Mucosa of descending colon (tissue), 3 donors: ENCODE measurements at regions of chr3 and their contacts with region 1.

Region 1: GRCh38 chr3:52001443-52001974 is 5.8 kb upstream of the RPL29 start:
- DNase-seq: peak; percentile 71 to 84 (median 81)
- ATAC-seq: peak; percentile 82
- H3K4me3 ChIP-seq: no peak overlapping the region
- H3K4me1 ChIP-seq: peaks cover 5% of the 10 kb centered on the region
- CTCF ChIP-seq: peak; percentile 71

Region 2: GRCh38 chr3:52123106-52123725 is 121.7 kb after region 1 on chr3:
- intact Hi-C with region 1: loop called in 1 of 2 experiments (anchors 5 kb)
- DNase-seq: peak; percentile 78 to 87 (median 86)
- ATAC-seq: peak; percentile 93
- H3K4me3 ChIP-seq: no peak overlapping the region
- H3K4me1 ChIP-seq: no peaks in the 10 kb centered on the region
- CTCF ChIP-seq: peak; percentile 88

Region 3: GRCh38 chr3:52144034-52144795 is 142.7 kb after region 1 on chr3:
- intact Hi-C with region 1: loop called (anchors 5 kb)
- DNase-seq: peak; percentile 77 to 96 (median 83)
- ATAC-seq: peak; percentile 96
- H3K4me3 ChIP-seq: no peak overlapping the region
- H3K4me1 ChIP-seq: no peaks in the 10 kb centered on the region
- CTCF ChIP-seq: peak; percentile 92

Region 4: DNA sequence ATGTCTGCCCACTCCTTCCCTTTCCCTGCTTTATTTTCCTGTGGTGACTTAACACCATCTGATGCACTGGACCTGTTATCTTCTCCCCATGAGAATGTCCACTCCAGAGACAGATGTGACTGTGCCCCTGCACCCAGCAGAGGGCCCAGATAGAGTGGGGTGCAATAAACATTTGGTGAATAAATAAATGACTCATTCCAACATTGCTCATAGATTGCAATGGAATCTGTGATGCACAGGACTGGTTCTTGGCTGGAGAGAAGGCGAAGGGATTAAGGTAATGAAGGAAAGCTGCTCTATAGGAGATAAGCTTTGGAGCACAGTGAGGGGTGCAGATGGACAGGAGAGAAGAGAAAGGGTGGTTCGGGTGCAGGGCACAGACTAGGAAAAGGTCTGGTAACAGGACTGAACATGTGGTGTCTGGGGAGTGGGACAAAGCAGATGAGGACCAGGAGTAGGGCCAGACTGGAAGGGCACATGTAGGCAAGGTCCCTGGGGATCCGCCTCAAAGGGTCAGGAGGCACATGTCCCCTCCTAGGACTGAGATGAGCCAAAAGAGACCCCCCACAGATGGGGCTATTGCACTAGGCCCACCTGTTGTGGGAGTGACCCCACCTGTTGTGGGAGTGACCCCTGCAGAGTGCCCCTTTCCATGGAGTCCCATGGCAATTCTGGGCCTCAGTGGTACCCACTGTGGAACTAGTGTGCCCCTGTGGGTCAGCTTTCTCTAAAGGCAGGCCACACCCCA is 170.2 kb after region 1 on chr3:
- intact Hi-C with region 1: no loop called
- DNase-seq: no peak
- ATAC-seq: peak; percentile 63
- H3K4me3 ChIP-seq: no peak overlapping the region
- H3K4me1 ChIP-seq: no peaks in the 10 kb centered on the region
- CTCF ChIP-seq: no peak

Region 5: GRCh38 chr3:52339612-52340011 is 338.1 kb after region 1 on chr3:
- intact Hi-C with region 1: loop called in 1 of 2 experiments (anchors 5 kb)
- DNase-seq: peak in 1 of 3 donors; percentile 78
- ATAC-seq: peak; percentile 86
- H3K4me3 ChIP-seq: no peak overlapping the region
- H3K4me1 ChIP-seq: no peaks in the 10 kb centered on the region
- CTCF ChIP-seq: peak; percentile 48